Right cardiac atrium (tissue), 5 donors: ENCODE measurements at regions of chr4 and their contacts with region 1.

Region 1: GRCh38 chr4:99117876-99118693 is 26.0 kb downstream of the ADH4 start:
- DNase-seq: no peak
- ATAC-seq: no peak
- H3K4me3 ChIP-seq: no peak overlapping the region
- H3K27ac ChIP-seq: no peak overlapping the region
- H3K4me1 ChIP-seq: no peaks in the 10 kb centered on the region
- H3K27me3 ChIP-seq: no peaks in the 10 kb centered on the region

Region 2: DNA sequence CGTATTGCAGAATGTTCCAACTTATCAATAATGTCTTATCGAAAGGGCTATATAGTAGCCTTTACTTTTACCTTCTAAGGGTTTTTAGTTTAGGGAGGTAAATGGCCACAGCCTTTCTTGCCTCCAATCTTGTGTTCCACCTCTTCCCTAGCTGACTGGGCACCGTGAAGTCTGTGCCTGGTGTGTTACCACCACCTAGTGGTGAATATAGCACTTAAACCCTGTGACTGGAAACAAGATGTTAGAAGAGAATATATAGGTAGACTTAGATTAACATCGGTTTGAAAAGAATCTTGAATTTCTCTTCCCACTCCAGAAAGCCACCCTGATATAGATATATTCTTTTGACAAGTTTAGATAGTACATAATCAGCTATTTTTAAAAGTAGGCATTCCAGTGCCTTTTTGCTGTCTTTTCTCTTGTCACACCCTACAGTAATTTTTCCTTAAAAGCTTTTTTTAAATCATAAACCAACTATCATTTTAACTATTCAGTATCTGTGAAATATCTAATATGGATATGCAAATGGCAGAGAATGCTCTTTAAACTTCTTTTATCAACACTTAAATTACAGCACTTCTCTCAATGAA is 344.9 kb after region 1 on chr4:
- intact Hi-C with region 1: loop called in 1 of 4 experiments (anchors 5 kb)
- DNase-seq: peak; percentile 27 to 52 (median 30)
- ATAC-seq: peak; percentile 74 to 83
- H3K4me3 ChIP-seq: no peak overlapping the region
- H3K27ac ChIP-seq: no peak overlapping the region
- H3K4me1 ChIP-seq: no peaks in the 10 kb centered on the region
- H3K27me3 ChIP-seq: no peaks in the 10 kb centered on the region